ENCODE measurements at regions of chr11 and their contacts with region 1.

Region 1: GRCh38 chr11:47819743-47820142 is 28.4 kb downstream of the NUP160 start:
- DNase-seq: no peak
- ATAC-seq: no peak
- H3K4me3 ChIP-seq: no peak overlapping the region
- H3K27ac ChIP-seq: no peak overlapping the region
- H3K4me1 ChIP-seq: no peaks in the 10 kb centered on the region
- H3K27me3 ChIP-seq: no peaks in the 10 kb centered on the region

Region 2: GRCh38 chr11:47750725-47751124 is 69.0 kb before region 1 on chr11:
- intact Hi-C with region 1: loop called in 1 of 4 experiments (anchors 5 kb)
- DNase-seq: no peak
- ATAC-seq: no peak
- H3K4me3 ChIP-seq: no peak overlapping the region
- H3K27ac ChIP-seq: no peak overlapping the region
- H3K4me1 ChIP-seq: no peaks in the 10 kb centered on the region
- H3K27me3 ChIP-seq: no peaks in the 10 kb centered on the region

Region 3: DNA sequence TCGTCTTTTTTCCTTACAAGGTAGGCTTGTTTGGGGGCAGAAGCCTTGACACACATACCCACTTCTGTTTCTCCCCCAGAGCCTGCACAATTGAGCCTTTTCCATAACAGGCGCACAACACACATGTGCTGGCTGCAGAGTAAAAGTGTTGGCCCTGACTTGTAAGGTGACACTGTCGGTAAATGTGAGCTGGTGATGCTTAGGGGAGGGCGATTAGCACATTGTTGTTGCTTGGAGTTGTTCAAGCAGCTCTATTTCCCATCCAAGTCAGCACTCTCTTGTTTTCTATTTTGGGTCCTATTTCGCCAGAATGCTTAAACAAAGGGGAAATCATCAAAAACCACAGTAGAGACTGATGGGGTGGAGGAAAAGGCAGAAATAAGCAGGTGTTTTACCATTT is 108.7 kb after region 1 on chr11:
- intact Hi-C with region 1: no loop called
- DNase-seq: no peak
- ATAC-seq: no peak
- H3K4me3 ChIP-seq: no peak overlapping the region
- H3K27ac ChIP-seq: no peak overlapping the region
- H3K4me1 ChIP-seq: no peaks in the 10 kb centered on the region
- H3K27me3 ChIP-seq: no peaks in the 10 kb centered on the region

Measured in right cardiac atrium (tissue), 5 donors.